CD4-positive, alpha-beta memory T cell (primary cell): ENCODE measurements at regions of chr14 and their contacts with region 1.

Region 1: DNA sequence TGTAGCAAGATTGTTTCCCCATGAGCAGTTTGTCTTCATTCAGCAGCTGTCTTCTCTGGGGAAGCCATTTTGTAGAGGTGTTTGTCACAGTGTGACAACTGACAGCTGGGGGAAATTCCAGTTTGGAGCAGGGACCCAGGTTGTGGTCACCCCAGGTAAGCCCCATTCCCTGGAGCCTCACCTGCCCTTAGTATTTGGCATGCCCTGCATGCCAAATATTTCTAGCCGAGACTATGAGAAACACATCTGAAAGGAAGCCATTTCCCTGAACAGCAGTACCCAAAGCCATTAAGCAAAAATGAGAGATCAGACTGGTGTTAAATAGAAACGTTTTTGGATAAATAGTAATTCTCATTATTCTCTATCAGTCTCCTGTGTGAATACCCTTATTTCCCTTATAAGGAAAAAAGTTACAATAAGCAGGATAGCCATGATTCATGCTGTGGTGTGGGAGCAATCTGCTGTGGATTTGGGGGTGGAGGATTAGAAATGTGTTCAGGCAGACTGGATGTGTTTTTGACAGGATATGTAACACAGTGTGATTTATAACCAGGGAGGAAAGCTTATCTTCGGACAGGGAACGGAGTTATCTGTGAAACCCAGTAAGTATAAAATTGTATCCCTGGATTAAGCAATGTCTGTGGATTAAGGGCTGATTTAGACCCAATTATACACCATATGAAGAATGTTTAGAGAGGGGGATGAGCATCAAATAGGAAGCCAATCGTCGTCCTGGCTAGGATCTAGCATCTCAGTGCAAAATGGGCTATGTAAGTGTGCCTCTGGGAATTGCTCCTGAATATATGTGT is 68.9 kb downstream of the DAD1 start:
- DNase-seq: no peak
- H3K4me3 ChIP-seq: peak overlapping the region; percentile 2 to 39
- H3K4me3 Mint-ChIP-seq: peak overlapping the region; percentile 83 to 91 (median 90)
- H3K27ac ChIP-seq: peak overlapping the region; percentile 76
- H3K27ac Mint-ChIP-seq: peak overlapping the region; percentile 95 to 100 (median 95)
- H3K4me1 ChIP-seq: peaks cover 98% of the 10 kb centered on the region
- H3K4me1 Mint-ChIP-seq: peaks cover 70 to 98% (median 84%) of the 10 kb centered on the region in 4 donors
- H3K27me3 ChIP-seq: no peaks in the 10 kb centered on the region
- H3K27me3 Mint-ChIP-seq: no peaks in the 10 kb centered on the region

Region 2: DNA sequence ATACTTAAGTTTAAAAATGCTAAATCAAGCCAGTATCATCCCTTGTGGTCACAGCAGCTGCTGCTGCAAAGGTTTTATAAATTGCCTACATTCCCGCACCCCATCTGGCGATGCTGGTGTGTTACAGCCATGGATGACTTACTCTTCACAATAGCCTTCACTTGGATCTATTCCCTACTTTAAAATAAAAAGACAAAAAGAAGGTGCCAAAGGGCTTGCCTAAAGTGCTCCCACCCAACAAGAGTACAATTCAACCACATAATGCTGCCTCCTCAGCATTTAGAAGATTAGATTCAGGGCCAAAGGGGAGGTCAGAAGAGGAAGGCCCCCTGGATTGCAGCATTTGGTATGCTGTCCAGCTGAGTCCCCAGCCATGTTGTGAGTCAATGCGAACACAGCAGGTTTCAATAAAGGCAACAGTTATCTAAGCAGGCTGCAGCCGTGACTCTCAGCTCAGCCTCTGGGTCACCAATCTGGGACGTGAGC is 107.1 kb before region 1 on chr14:
- CTCF ChIA-PET with region 1: no interaction called
- POLR2A ChIA-PET with region 1: no interaction called
- intact Hi-C with region 1: no loop called
- DNase-seq: no peak
- H3K4me3 ChIP-seq: no peak overlapping the region
- H3K4me3 Mint-ChIP-seq: no peak overlapping the region
- H3K27ac ChIP-seq: no peak overlapping the region
- H3K27ac Mint-ChIP-seq: no peak overlapping the region
- H3K4me1 ChIP-seq: no peaks in the 10 kb centered on the region
- H3K4me1 Mint-ChIP-seq: no peaks in the 10 kb centered on the region
- H3K27me3 ChIP-seq: no peaks in the 10 kb centered on the region
- H3K27me3 Mint-ChIP-seq: no peaks in the 10 kb centered on the region

Region 3: DNA sequence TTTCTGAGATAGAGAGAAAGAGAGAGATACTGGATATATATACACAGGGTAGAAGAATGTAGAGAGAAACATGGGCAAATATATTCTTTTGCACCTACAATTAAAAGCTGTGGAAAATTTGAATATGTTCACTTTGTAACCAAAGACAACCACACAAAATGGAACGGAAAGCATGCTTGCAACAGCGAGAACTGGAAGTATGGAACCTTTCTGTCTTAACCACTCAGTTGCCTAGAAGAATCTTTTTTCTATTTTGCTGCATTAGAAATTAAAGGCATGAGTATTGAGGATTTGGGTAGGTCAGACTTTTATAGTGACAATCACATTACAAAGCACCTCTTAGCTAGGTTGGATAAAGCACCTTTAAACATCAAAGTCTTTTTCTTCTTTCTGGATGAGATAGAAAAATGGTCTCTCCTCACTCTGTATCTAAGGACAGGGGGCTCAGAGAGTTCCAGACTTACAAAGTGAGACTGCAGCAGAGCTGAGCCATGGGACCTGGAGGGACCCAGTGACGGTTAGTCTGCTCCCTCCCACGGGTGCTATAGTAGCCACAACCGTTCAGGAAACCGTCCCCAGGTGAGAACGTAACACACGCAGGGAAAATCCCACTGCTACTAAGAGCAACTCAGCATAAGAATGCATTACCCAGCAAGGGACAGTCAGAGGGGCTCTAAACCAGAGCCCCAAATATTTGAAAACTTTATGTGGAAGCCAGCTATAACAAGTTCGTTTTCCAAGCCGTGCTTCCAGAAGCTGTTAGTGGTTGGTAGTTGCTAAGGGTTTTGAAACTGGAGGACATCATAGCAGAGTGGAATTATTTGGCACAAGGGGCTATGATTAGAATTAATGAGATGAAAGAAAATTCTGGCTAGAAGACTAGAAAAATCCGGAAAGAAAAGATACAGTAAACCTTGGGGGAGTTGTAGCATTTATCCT is 28.1 kb before region 1 on chr14:
- CTCF ChIA-PET with region 1: interaction called, 4 read pairs
- POLR2A ChIA-PET with region 1: interaction called, 1,107 read pairs
- intact Hi-C with region 1: no loop called
- DNase-seq: peak in 2 of 5 donors; percentile 36 to 80
- H3K4me3 ChIP-seq: peak overlapping the region in 1 of 2 donors; percentile 55
- H3K4me3 Mint-ChIP-seq: peak overlapping the region; percentile 86 to 96 (median 90)
- H3K27ac ChIP-seq: peak overlapping the region; percentile 67
- H3K27ac Mint-ChIP-seq: peak overlapping the region; percentile 91 to 100 (median 94)
- H3K4me1 ChIP-seq: peaks cover 6% of the 10 kb centered on the region
- H3K4me1 Mint-ChIP-seq: peaks cover 1 to 76% (median 9%) of the 10 kb centered on the region in 4 donors
- H3K27me3 ChIP-seq: no peaks in the 10 kb centered on the region
- H3K27me3 Mint-ChIP-seq: no peaks in the 10 kb centered on the region

Region 4: DNA sequence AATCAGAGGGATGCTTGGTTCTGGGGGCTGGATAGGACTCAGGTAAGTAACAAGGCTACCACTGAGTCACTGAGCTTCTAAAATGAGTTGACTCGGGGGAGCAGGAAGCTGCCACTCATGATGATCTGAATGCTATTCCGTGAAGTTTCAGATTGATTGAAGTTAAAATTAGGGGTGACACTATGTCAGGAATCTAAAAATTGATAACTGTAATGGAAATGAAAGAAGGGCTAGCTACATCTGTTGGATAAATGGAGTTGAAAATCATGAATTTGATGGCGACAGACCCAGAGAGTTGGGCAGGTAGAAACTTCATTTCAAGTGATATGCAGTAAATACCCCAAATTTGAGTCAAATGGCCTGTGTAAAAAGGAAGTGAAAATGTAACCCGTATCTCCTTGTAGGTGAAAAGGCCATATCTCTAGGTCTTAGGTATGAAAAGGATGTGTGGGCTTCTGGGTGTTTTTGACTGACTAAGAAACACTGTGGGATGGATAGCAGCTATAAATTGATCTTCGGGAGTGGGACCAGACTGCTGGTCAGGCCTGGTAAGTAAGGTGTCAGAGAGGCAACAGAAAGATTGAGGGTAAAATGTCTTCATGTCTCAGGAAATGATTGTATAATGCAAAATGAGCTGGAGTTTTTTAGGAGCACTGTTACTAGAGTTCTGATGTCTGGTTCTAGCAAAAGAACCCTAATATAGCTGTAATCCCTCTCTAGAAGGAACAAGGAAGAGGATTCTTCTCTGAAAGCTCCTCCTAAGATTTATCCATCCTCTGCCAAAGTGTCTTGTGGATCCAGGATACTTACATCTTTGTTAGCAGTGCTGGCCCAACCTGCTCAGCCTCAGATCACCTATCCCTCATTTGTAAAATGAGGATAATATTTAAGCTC is 11.6 kb after region 1 on chr14:
- CTCF ChIA-PET with region 1: interaction called, 11 read pairs
- POLR2A ChIA-PET with region 1: interaction called, 1,012 read pairs
- intact Hi-C with region 1: loop called (anchors 1 kb)
- DNase-seq: peak in 2 of 5 donors; percentile 51 to 65
- H3K4me3 ChIP-seq: peak overlapping the region; percentile 44 to 49
- H3K4me3 Mint-ChIP-seq: peak overlapping the region; percentile 84 to 91 (median 90)
- H3K27ac ChIP-seq: peak overlapping the region; percentile 58
- H3K27ac Mint-ChIP-seq: peak overlapping the region; percentile 92 to 100 (median 97)
- H3K4me1 ChIP-seq: peaks cover 96% of the 10 kb centered on the region
- H3K4me1 Mint-ChIP-seq: peaks cover 78 to 99% (median 86%) of the 10 kb centered on the region in 4 donors
- H3K27me3 ChIP-seq: no peaks in the 10 kb centered on the region
- H3K27me3 Mint-ChIP-seq: no peaks in the 10 kb centered on the region